Natural killer cell (primary cell): ENCODE measurements at regions of chr1 and their contacts with region 1.

Region 1: DNA sequence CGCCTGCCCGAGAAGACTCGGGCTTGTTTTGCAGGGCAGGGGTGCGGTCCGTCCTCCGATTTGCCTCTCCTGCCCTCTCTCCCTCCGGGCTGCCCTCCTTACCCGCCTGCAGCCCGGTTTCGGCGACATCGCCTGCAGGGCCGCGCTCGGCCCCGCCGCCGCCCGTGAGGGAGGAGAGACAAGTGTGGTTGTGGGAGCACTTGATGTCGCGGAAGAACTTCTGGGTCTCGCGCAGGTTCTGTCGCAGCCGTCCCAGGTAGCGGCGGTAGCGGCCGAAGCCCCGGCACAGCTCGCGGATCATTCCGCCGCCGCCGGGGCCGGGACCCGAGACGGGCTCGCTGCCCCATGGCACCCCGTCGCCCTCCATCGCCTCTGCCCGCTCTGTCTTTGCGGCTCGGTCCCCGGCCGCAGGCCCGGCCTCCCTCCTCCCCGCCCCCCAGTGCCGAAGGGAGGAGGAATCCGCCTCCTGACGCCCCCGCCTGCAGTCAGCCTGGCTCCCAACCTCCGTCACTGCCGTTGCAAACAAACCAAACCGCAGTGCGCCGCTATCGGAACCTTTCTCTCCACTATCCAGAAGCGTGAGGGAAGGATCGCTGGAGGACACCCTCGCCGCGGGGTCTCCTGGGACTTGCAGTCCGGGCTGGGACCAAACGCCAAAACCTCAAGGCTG is at the start of gene DSTYK:
- DNase-seq: peak; percentile 78 to 95
- ATAC-seq: peak; percentile 87 to 95 (median 90)
- H3K4me3 ChIP-seq: peak within 1 kb of the TSS; percentile 99
- H3K4me3 Mint-ChIP-seq: peak within 1 kb of the TSS; percentile 97
- H3K27ac ChIP-seq: peak within 1 kb of the TSS; percentile 76
- H3K27ac Mint-ChIP-seq: peak within 1 kb of the TSS; percentile 88 to 97
- H3K4me1 ChIP-seq: peaks cover 12% of the 10 kb centered on the region
- H3K4me1 Mint-ChIP-seq: peaks cover 24 to 35% of the 10 kb centered on the region in 2 donors
- H3K27me3 ChIP-seq: no peaks in the 10 kb centered on the region
- H3K27me3 Mint-ChIP-seq: no peaks in the 10 kb centered on the region
- CTCF ChIP-seq: no peak
- total RNA-seq, gene DSTYK: 9.9 to 17.5 (median 14.9) TPM

Region 2: GRCh38 chr1:205121660-205122488 is 89.4 kb before region 1 on chr1 and contains the start of gene RBBP5:
- intact Hi-C with region 1: loop called (anchors 1 kb)
- DNase-seq: peak; percentile 96 to 98
- ATAC-seq: peak; percentile 93 to 98 (median 93)
- H3K4me3 ChIP-seq: peak within 1 kb of the TSS; percentile 79
- H3K4me3 Mint-ChIP-seq: peak within 1 kb of the TSS; percentile 100
- H3K27ac ChIP-seq: peak within 1 kb of the TSS; percentile 94
- H3K27ac Mint-ChIP-seq: peak within 1 kb of the TSS; percentile 99 to 100
- H3K4me1 ChIP-seq: peaks cover 11% of the 10 kb centered on the region
- H3K4me1 Mint-ChIP-seq: peaks cover 37 to 42% of the 10 kb centered on the region in 2 donors
- H3K27me3 ChIP-seq: no peaks in the 10 kb centered on the region
- H3K27me3 Mint-ChIP-seq: no peaks in the 10 kb centered on the region
- CTCF ChIP-seq: peak; percentile 46
- total RNA-seq, gene RBBP5: 13.9 to 18.2 (median 17.8) TPM

Region 3: GRCh38 chr1:205227584-205228006 is 16.3 kb after region 1 on chr1 and contains the start of gene TMCC2:
- intact Hi-C with region 1: loop called (anchors 2 kb)
- DNase-seq: peak; percentile 58 to 88
- ATAC-seq: peak; percentile 85 to 87 (median 86)
- H3K4me3 ChIP-seq: peak within 1 kb of the TSS; percentile 46
- H3K4me3 Mint-ChIP-seq: peak within 1 kb of the TSS; percentile 91
- H3K27ac ChIP-seq: no peak within 1 kb of the TSS
- H3K27ac Mint-ChIP-seq: peak within 1 kb of the TSS in 1 of 2 donors; percentile 14
- H3K4me1 ChIP-seq: peaks cover 28% of the 10 kb centered on the region
- H3K4me1 Mint-ChIP-seq: peaks cover 31 to 36% of the 10 kb centered on the region in 2 donors
- H3K27me3 ChIP-seq: peaks cover 9% of the 10 kb centered on the region
- H3K27me3 Mint-ChIP-seq: peaks cover 27 to 32% of the 10 kb centered on the region in 2 donors
- CTCF ChIP-seq: no peak
- total RNA-seq, gene TMCC2: 0.93 to 1.5 (median 1.1) TPM

Region 4: GRCh38 chr1:205273551-205273982 is 62.3 kb after region 1 on chr1:
- intact Hi-C with region 1: no loop called
- DNase-seq: peak; percentile 83 to 92
- ATAC-seq: peak; percentile 91 to 99 (median 98)
- H3K4me3 ChIP-seq: no peak overlapping the region
- H3K4me3 Mint-ChIP-seq: peak overlapping the region; percentile 37
- H3K27ac ChIP-seq: no peak overlapping the region
- H3K27ac Mint-ChIP-seq: no peak overlapping the region
- H3K4me1 ChIP-seq: peaks cover 37% of the 10 kb centered on the region
- H3K4me1 Mint-ChIP-seq: peaks cover 14 to 18% of the 10 kb centered on the region in 2 donors
- H3K27me3 ChIP-seq: no peaks in the 10 kb centered on the region
- H3K27me3 Mint-ChIP-seq: peaks cover 0 to 6% of the 10 kb centered on the region in 2 donors
- CTCF ChIP-seq: peak; percentile 99

Region 5: DNA sequence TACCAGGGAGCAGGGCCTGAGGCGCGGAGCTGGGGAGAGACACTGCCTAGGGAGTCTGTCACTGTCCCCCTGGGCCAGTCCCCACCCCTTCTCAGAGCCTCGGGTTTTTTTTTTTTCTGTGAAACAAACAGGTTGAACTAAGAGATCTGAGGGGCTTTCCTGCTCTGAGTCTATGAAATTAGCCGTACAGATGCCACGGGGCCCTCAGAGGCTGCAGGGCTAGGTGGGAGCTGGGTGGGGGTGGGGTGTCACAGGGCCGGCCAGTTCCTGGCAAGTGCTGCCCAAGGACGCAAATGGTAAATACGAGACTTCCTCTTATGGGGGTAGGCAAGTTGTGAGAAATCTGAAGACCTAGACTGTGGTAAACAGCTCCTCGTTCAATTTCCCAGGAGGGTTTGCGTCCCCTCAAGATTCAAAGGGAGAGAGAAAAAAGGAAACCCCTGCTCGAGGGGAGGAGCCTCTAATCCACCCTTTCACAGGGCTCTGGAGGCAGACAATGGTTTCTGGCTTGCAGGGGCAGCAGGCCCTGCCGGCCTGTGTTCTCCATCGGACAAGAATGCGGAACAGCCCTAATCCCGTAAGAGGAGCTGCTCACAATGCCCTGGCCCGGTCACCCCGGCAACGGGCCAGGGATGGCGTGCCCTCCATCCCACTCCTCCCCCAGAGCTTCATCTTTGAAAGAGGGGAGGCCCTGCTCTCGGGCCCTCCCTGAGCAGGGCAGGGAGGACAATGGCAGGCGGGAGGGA is 102.4 kb after region 1 on chr1:
- intact Hi-C with region 1: loop called (anchors 2 kb)
- DNase-seq: peak; percentile 51 to 78
- ATAC-seq: peak; percentile 86 to 91 (median 89)
- H3K4me3 ChIP-seq: peak overlapping the region; percentile 22
- H3K4me3 Mint-ChIP-seq: peak overlapping the region; percentile 86
- H3K27ac ChIP-seq: peak overlapping the region; percentile 88
- H3K27ac Mint-ChIP-seq: peak overlapping the region; percentile 94 to 98
- H3K4me1 ChIP-seq: peaks cover 82% of the 10 kb centered on the region
- H3K4me1 Mint-ChIP-seq: peaks cover 76 to 82% of the 10 kb centered on the region in 2 donors
- H3K27me3 ChIP-seq: no peaks in the 10 kb centered on the region
- H3K27me3 Mint-ChIP-seq: no peaks in the 10 kb centered on the region
- CTCF ChIP-seq: no peak

Region 6: DNA sequence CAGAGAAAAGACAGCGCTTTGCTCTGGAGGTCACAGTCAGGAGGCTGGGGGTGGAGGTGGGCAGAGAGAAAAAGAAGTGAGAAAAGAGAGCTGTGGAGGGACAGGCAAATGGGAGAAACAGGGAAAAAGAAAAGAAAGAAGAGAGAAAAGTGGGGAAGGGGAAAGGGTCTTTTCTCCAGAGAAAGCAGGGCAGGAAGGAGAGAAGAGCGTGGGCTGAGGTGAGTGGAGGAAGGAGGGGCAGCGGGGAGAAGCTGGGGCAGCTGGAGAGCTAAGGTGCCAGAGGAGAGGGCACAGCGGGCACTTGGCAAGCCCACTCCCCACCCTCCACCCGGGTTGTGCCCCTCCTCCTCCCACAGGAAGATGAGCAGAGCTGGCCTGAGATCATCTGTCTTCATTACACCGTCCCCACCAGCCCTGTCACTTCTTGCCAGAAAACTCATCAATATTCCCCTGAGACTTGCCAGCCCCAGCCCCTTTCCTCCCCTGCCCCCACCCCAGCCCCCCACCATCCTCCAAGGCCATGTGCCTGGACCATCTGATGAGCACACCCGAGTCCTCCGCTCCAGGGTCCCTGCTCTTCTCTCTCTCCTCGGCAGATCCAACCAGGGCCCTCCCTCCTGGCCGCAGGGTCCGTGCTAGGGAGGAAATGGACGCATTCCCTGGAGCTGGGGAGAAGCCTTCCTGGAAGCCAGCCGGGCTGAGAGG is 261.6 kb after region 1 on chr1:
- intact Hi-C with region 1: no loop called
- DNase-seq: no peak
- ATAC-seq: no peak
- H3K4me3 ChIP-seq: no peak overlapping the region
- H3K4me3 Mint-ChIP-seq: no peak overlapping the region
- H3K27ac ChIP-seq: no peak overlapping the region
- H3K27ac Mint-ChIP-seq: peak overlapping the region in 1 of 2 donors; percentile 1
- H3K4me1 ChIP-seq: peaks cover 14% of the 10 kb centered on the region
- H3K4me1 Mint-ChIP-seq: peaks cover 8 to 12% of the 10 kb centered on the region in 2 donors
- H3K27me3 ChIP-seq: no peaks in the 10 kb centered on the region
- H3K27me3 Mint-ChIP-seq: peaks cover 28 to 37% of the 10 kb centered on the region in 2 donors
- CTCF ChIP-seq: no peak